A673 (cell line): ENCODE measurements at regions of chr5 and their contacts with region 1.

Region 1: DNA sequence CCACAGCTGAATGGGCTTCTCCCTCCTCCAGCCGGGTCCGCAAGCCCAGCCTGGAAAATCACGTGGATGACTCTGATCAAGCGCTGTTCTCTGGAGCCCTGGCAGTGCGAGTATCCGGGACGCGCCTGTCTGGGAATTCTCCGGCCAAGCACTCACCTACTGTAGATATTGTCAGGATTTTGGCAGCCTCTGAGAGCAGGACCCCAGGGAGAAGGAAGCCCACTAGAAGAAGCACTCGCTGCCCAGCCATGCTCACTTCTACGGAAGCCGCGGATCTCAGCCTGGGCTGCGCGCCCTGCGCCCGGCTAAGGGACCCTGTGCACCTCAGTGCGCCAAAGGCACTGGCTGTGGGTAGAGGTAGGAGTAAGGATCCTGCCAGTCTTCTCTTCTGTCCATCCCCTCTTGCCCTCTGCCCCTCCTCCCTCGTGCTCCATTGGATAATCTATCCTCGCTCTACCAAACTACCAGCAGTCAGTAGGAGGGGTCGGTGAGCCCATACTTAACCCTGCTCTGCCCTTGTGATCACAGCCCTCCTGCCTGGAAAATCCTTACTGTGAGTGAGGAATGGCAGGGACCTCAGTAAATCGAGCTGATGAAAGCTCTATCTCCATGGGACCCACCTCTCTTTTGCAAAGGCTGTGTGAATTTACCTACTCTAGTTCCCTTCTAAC is at the start of gene UGT3A2:
- DNase-seq: peak; percentile 92
- H3K4me3 ChIP-seq: peak within 1 kb of the TSS; percentile 87
- H3K27ac ChIP-seq: peak within 1 kb of the TSS; percentile 97
- H3K4me1 ChIP-seq: peaks cover 33% of the 10 kb centered on the region
- H3K27me3 ChIP-seq: no peaks in the 10 kb centered on the region
- CTCF ChIP-seq: no peak
- total RNA-seq, gene UGT3A2: 528 and 529 TPM in 2 replicates

Region 2: GRCh38 chr5:36158144-36158543 is 91.5 kb after region 1 on chr5:
- CTCF ChIA-PET with region 1: no interaction called
- POLR2A ChIA-PET with region 1: interaction called, 13 read pairs
- intact Hi-C with region 1: no loop called
- DNase-seq: peak; percentile 87
- H3K4me3 ChIP-seq: peak overlapping the region; percentile 17
- H3K27ac ChIP-seq: peak overlapping the region; percentile 89
- H3K4me1 ChIP-seq: peaks cover 75% of the 10 kb centered on the region
- H3K27me3 ChIP-seq: no peaks in the 10 kb centered on the region
- CTCF ChIP-seq: no peak

Region 3: DNA sequence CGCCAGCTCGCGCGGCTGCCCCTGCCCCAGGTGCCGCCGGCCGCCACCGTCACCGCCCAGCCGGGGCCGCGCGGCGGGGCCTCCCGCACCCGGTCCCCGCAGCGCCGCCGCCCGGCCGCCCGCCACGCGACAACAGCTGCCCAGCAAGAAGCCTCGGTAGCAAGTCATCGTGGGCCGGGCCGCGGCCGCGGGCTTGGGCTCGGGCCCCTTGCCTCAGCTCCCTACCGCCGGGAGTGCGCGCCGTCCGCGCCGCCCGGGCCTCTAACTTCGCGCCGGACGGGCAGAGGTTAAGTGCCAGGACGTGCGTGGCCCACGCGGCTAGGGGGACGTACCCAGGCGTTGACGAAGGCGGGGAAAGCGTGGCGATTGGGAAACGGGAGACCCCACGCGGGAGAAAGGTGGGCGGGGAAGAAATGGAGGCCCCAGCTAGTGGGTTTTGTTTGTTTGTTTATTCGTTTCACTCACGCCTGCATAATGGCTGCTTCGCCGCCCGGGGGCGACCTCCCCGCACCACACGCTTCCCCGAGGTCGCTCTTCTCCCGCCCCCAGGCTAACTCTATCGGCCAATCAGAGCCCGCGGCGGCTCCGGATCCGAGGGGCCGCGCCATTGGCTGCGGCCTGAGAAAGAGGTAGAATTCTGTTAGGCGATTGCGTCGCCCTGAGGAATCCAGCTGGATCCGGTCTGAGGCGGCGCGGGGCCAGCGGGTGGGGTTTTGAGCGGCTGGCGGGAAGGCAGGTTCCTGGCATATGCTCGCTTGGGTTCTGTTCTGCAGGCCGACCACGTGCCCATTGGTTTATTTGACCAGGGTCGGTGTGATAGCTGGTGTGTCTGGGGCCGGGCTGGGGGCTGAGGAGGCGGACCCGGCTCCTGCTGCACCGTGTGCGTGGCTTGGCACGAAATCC is 175.2 kb after region 1 on chr5 and contains the start of gene NADK2:
- CTCF ChIA-PET with region 1: no interaction called
- POLR2A ChIA-PET with region 1: interaction called, 3 read pairs
- intact Hi-C with region 1: loop called (anchors 5 kb)
- DNase-seq: peak; percentile 99
- H3K4me3 ChIP-seq: peak within 1 kb of the TSS; percentile 84
- H3K27ac ChIP-seq: peak within 1 kb of the TSS; percentile 92
- H3K4me1 ChIP-seq: peaks cover 26% of the 10 kb centered on the region
- H3K27me3 ChIP-seq: no peaks in the 10 kb centered on the region
- CTCF ChIP-seq: peak; percentile 78
- total RNA-seq, gene NADK2: 31.6 and 37.1 TPM in 2 replicates

Region 4: DNA sequence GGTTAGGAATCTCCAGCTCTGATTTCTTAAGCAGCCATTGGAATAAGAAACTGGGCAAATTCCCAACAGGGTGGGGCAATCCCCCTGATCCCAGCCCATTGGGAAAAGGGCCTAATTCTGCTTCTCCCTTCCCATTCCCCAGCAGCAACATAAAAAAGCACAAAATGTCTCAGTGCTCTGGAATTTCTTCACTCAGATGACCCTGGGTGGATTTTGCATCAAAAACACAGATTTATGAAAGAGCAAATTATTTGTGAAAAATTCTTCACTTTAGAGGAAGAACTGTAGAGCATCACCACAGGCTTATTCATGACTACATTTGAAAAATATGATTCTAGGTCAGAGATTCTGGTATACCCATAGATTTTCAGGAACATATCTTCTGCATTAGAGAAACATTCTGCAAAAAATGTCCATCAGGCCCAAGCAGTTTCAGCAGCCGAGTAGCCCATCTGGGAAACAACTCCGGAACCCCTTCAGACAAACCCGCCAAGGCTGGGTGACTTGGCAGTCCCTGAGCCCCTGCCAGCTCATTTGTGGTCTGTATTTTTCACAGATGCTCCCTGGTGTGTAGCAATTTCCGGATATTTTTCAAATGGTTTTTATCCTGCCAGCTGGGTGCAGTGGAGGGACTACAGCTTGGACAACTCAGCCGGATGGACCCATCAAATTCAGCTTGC is 337.1 kb after region 1 on chr5:
- CTCF ChIA-PET with region 1: no interaction called
- POLR2A ChIA-PET with region 1: no interaction called
- intact Hi-C with region 1: loop called (anchors 5 kb)
- DNase-seq: peak; percentile 96
- H3K4me3 ChIP-seq: no peak overlapping the region
- H3K27ac ChIP-seq: peak overlapping the region; percentile 52
- H3K4me1 ChIP-seq: peaks cover 30% of the 10 kb centered on the region
- H3K27me3 ChIP-seq: no peaks in the 10 kb centered on the region
- CTCF ChIP-seq: no peak